CD4-positive, alpha-beta memory T cell (primary cell): ENCODE measurements at regions of chr17 and their contacts with region 1.

Region 1: DNA sequence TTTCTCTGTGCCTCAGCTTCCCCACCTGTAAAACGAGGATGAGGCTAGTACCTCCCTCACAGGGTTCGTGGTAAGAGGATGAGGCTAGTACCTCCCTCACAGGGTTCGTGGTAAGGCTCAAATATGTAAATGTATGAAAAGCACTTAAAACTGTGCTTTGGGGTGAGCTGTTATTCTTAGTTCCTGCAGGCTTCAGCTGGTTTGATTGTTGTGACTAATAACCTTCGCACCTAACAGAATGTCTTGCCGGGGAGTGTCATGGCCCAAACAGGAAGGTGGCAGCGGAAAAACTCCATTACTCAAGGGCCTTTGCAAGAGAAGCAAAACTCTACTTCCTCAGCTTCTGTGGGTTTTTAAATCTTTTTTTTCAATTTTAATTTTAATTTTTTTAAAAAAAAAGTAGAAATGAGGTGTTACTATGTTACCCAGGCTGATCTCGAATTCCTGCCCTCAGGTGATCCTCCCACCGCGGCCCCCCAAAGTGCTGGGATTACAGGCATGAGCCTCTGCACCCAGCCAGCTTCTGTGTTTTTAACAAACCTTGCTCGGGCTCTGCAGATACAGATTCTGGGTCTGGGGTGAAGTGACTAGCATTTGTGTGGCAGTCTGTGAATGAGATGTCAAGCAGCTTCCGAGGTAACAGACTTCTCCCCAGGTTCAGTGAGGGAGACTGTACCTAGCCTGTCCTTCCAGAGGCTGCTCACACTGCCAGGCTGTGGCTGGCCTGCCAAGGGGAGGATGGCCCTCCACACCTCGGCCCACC is 103.0 kb downstream of the RAB11FIP4 start:
- DNase-seq: peak; percentile 71 to 91 (median 77)
- H3K4me3 ChIP-seq: peak overlapping the region in 1 of 2 donors; percentile 37
- H3K4me3 Mint-ChIP-seq: peak overlapping the region; percentile 26 to 84 (median 73)
- H3K27ac ChIP-seq: peak overlapping the region; percentile 69
- H3K27ac Mint-ChIP-seq: peak overlapping the region; percentile 95 to 99 (median 97)
- H3K4me1 ChIP-seq: peaks cover 93% of the 10 kb centered on the region
- H3K4me1 Mint-ChIP-seq: peaks cover 57 to 99% (median 80%) of the 10 kb centered on the region in 4 donors
- H3K27me3 ChIP-seq: no peaks in the 10 kb centered on the region
- H3K27me3 Mint-ChIP-seq: no peaks in the 10 kb centered on the region

Region 2: GRCh38 chr17:31112001-31112661 is 382.3 kb before region 1 on chr17:
- CTCF ChIA-PET with region 1: no interaction called
- POLR2A ChIA-PET with region 1: no interaction called
- intact Hi-C with region 1: no loop called
- DNase-seq: no peak
- H3K4me3 ChIP-seq: no peak overlapping the region
- H3K4me3 Mint-ChIP-seq: no peak overlapping the region
- H3K27ac ChIP-seq: no peak overlapping the region
- H3K27ac Mint-ChIP-seq: peak overlapping the region in 1 of 7 donors; percentile 60
- H3K4me1 ChIP-seq: no peaks in the 10 kb centered on the region
- H3K4me1 Mint-ChIP-seq: peaks cover 0 to 2% (median 0%) of the 10 kb centered on the region in 4 donors
- H3K27me3 ChIP-seq: no peaks in the 10 kb centered on the region
- H3K27me3 Mint-ChIP-seq: no peaks in the 10 kb centered on the region

Region 3: GRCh38 chr17:31508288-31509094 is 14.1 kb after region 1 on chr17:
- CTCF ChIA-PET with region 1: interaction called, 51 read pairs
- POLR2A ChIA-PET with region 1: interaction called, 332 read pairs
- intact Hi-C with region 1: no loop called
- DNase-seq: peak; percentile 80 to 91 (median 85)
- H3K4me3 ChIP-seq: peak overlapping the region; percentile 42 to 72
- H3K4me3 Mint-ChIP-seq: peak overlapping the region; percentile 87 to 98 (median 94)
- H3K27ac ChIP-seq: peak overlapping the region; percentile 72
- H3K27ac Mint-ChIP-seq: peak overlapping the region; percentile 95 to 99 (median 98)
- H3K4me1 ChIP-seq: peaks cover 58% of the 10 kb centered on the region
- H3K4me1 Mint-ChIP-seq: peaks cover 39 to 73% (median 54%) of the 10 kb centered on the region in 4 donors
- H3K27me3 ChIP-seq: no peaks in the 10 kb centered on the region
- H3K27me3 Mint-ChIP-seq: no peaks in the 10 kb centered on the region

Region 4: GRCh38 chr17:31549525-31550388 is 55.3 kb after region 1 on chr17:
- CTCF ChIA-PET with region 1: no interaction called
- POLR2A ChIA-PET with region 1: interaction called, 14 read pairs
- intact Hi-C with region 1: no loop called
- DNase-seq: peak; percentile 83 to 87 (median 85)
- H3K4me3 ChIP-seq: peak overlapping the region; percentile 47 to 81
- H3K4me3 Mint-ChIP-seq: peak overlapping the region; percentile 83 to 91 (median 90)
- H3K27ac ChIP-seq: peak overlapping the region; percentile 62
- H3K27ac Mint-ChIP-seq: peak overlapping the region; percentile 23 to 91 (median 84)
- H3K4me1 ChIP-seq: peaks cover 7% of the 10 kb centered on the region
- H3K4me1 Mint-ChIP-seq: peaks cover 10 to 39% (median 14%) of the 10 kb centered on the region in 4 donors
- H3K27me3 ChIP-seq: no peaks in the 10 kb centered on the region
- H3K27me3 Mint-ChIP-seq: no peaks in the 10 kb centered on the region